K562 (cell line): ENCODE measurements at regions of chr2 and their contacts with region 1.

Region 1: DNA sequence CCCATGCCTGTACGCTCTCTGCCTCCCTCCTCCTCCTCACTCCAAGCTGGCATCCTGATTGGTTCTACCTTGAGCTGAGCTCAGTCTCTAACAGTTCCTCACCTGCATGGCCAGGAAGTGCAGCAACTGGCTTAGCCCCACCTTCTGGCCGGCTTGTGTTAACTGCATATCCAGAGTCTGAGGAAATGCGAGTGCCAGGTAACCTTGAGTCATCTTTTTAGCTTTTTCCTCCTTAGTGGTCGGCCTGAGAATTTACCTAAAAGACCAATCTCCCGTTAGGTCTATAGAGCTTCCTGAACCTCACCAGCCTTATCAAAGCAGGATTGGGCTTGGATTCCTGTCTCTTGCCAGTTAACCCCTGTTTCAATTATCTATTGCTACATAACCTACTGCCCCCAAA is 89.5 kb upstream of the STK39 start:
- DNase-seq: peak in 2 of 4 experiments; percentile 28 to 47
- ATAC-seq: peak; percentile 93
- H3K4me3 ChIP-seq: no peak overlapping the region
- H3K27ac ChIP-seq: no peak overlapping the region
- H3K4me1 ChIP-seq: no peaks in the 10 kb centered on the region
- H3K27me3 ChIP-seq: peaks cover 11 to 14% of the 10 kb centered on the region in 2 experiments
- CTCF ChIP-seq: peak; percentile 57 to 60 (median 58)
- EP300 ChIP-seq: no peak
- POLR2A ChIP-seq: no peak
- RAD21 ChIP-seq: peak; percentile 12 to 62; a peak in 2 of 4 replicates

Region 2: DNA sequence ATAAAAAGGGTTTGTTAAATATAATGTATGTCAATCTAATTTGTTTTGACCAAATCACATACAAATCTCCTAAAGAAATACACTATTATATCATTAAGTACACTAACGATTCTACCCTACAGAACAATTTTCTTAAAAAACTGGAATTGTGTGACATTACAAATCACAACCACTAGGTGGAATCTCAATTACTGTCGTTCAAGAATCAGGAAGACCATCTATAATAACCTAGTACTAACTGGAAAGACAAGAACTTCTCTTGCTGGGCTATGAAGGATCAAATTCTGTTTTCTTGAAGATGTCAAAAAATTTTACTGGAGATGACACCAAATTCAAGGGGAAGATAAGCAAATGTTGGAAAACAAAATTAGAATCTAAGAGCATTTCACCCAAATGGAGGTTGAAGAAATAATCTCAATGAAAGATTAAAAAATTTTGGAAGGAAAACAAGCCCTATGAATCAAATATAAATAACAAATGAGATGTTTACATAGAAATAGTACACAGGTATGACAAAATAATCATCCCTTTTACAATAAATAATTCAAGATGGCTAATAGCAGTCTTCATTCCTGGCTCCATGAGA is 200.4 kb before region 1 on chr2:
- CTCF ChIA-PET with region 1: interaction called, 3 read pairs
- POLR2A ChIA-PET with region 1: no interaction called
- in situ Hi-C with region 1: no loop called
- intact Hi-C with region 1: loop called (anchors 5 kb)
- DNase-seq: peak; percentile 24 to 44 (median 38)
- ATAC-seq: peak; percentile 80
- H3K4me3 ChIP-seq: no peak overlapping the region
- H3K27ac ChIP-seq: no peak overlapping the region
- H3K4me1 ChIP-seq: no peaks in the 10 kb centered on the region
- H3K27me3 ChIP-seq: peaks cover 0 to 6% of the 10 kb centered on the region in 2 experiments; a peak in 2 of 5 replicates
- CTCF ChIP-seq: peak; percentile 24 to 61 (median 45); a peak in 5 of 6 replicates
- EP300 ChIP-seq: no peak
- POLR2A ChIP-seq: no peak
- RAD21 ChIP-seq: peak; percentile 20 to 54; a peak in 2 of 4 replicates

Region 3: DNA sequence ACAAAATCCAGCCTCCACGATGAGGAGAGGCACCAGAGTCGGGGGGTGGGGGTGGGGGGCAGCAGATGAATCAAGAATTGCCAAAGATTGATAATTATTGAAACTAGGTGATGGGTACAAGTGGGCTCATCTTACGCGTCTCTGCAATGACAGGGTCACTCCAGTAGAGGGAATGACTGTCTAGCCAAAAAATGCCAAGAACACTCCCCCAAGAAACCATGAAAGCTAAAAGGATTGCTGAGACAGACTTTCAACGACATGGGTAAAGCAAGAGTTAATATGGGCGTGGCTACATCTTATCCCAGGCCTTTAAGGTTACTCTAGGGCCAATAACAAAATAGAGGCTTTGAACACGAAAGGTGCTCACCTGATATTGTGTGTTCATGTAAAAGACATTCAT is 176.0 kb before region 1 on chr2:
- CTCF ChIA-PET with region 1: no interaction called
- POLR2A ChIA-PET with region 1: no interaction called
- in situ Hi-C with region 1: no loop called
- intact Hi-C with region 1: loop called (anchors 2 kb)
- DNase-seq: peak; percentile 24 to 35 (median 30)
- ATAC-seq: peak; percentile 79
- H3K4me3 ChIP-seq: no peak overlapping the region
- H3K27ac ChIP-seq: no peak overlapping the region
- H3K4me1 ChIP-seq: no peaks in the 10 kb centered on the region
- H3K27me3 ChIP-seq: peaks cover 0 to 7% of the 10 kb centered on the region in 2 experiments; a peak in 2 of 5 replicates
- CTCF ChIP-seq: peak; percentile 30 to 47 (median 46); a peak in 4 of 6 replicates
- EP300 ChIP-seq: no peak
- POLR2A ChIP-seq: no peak
- RAD21 ChIP-seq: peak; percentile 26 to 56; a peak in 2 of 4 replicates

Region 4: GRCh38 chr2:168559187-168559586 is 222.3 kb after region 1 on chr2:
- CTCF ChIA-PET with region 1: no interaction called
- POLR2A ChIA-PET with region 1: no interaction called
- in situ Hi-C with region 1: no loop called
- intact Hi-C with region 1: no loop called
- DNase-seq: no peak
- ATAC-seq: no peak
- H3K4me3 ChIP-seq: no peak overlapping the region
- H3K27ac ChIP-seq: no peak overlapping the region
- H3K4me1 ChIP-seq: no peaks in the 10 kb centered on the region
- H3K27me3 ChIP-seq: no peaks in the 10 kb centered on the region
- CTCF ChIP-seq: no peak
- EP300 ChIP-seq: no peak
- POLR2A ChIP-seq: no peak
- RAD21 ChIP-seq: no peak